Activated CD8-positive, alpha-beta memory T cell treated with anti-CD3 and anti-CD28 coated beads, Interleukin-2, amount 10 ng/mL, durations not matched to agents 7 days and 5 days (primary cell): ENCODE measurements at regions of chr11 and their contacts with region 1.

Region 1: DNA sequence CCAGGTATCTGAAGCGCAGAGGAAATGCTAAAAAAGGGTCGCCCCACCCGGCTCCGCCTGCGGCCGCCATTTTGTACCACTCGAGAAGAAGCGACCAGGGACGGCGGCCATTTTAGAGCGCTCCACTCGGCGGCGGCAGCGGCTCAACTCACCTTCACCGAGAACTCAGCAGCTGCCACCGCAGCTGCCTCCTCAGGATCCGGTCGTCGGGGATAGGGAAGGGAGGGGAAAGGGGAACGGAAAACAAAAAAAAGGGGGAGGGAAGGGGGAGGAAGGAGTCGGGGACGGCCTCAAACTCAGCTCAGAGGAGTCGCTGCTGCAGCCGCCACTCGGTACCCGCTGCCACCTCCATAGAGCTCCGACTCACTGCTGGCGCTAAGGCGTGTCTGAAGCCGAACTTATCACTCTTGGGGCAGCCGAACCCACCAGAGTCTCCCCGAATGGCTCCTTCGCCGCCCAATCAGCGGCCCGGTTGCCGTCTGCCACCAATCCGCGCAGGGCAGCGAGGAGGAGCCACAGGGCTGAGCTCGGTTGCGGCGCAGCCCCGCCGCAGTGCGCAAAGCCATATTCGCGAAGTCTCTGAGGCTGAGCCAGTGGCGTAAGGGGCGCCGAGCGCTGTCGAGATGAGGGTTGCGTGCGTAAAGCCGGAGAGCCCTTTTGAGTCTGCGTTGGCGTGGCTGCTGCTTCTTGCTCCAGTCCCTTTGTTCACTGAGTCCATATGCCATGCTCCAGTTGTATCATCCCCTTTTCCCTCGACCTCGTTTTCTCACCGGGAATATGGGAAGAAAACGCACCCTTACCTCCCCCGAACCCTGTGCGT is at the start of gene EIF4G2:
- DNase-seq: peak; percentile 98
- ATAC-seq: peak; percentile 93
- H3K4me3 Mint-ChIP-seq: peak within 1 kb of the TSS; percentile 86
- H3K27ac Mint-ChIP-seq: peak within 1 kb of the TSS; percentile 99
- H3K4me1 Mint-ChIP-seq: peaks cover 42% of the 10 kb centered on the region
- H3K27me3 Mint-ChIP-seq: no peaks in the 10 kb centered on the region
- total RNA-seq, gene EIF4G2: 579 to 898 TPM

Region 2: GRCh38 chr11:10784232-10785145 is 24.3 kb before region 1 on chr11:
- CTCF ChIA-PET with region 1: no interaction called
- DNase-seq: no peak
- ATAC-seq: no peak
- H3K4me3 Mint-ChIP-seq: no peak overlapping the region
- H3K27ac Mint-ChIP-seq: no peak overlapping the region
- H3K4me1 Mint-ChIP-seq: peaks cover under 1% of the 10 kb centered on the region
- H3K27me3 Mint-ChIP-seq: no peaks in the 10 kb centered on the region

Region 3: DNA sequence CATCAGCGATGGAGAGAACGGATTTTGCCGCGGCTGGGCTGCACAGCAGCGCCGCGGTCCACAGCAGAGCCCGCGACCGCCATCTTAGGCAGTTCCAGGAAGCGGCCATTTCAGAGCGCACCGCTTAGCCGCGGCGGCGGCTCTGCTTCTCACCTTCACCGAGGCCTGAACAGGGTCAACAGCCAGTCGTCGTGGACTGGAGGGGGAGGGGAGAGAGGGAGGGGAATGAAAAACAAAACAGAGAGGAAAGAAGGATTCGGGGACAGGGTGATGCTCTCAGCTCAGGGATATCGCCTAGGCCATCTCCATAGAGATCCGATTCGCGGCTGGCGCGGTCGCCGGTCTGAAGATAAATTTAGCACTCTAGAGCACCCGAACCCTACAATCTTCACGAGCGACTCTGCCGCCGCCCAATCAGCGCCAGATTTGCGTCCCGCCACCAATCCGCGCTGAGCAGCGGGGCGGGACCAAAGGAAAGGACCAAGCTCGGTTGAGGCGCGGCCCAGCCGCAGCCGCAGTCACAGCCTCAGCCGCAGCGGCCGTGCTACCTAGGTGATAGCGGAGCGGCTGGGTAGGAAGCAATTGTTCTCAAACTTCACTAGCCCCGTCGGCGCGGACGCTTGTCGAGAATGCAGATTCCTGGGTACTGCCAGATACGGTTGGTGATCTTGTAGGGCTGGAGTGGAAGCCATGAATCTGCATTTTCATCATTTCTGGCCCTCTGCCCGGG is 49.1 kb after region 1 on chr11 and contains the start of gene ZBED5:
- CTCF ChIA-PET with region 1: interaction called, 28 read pairs
- DNase-seq: peak; percentile 97
- ATAC-seq: peak; percentile 91
- H3K4me3 Mint-ChIP-seq: peak within 1 kb of the TSS; percentile 98
- H3K27ac Mint-ChIP-seq: peak within 1 kb of the TSS; percentile 100
- H3K4me1 Mint-ChIP-seq: peaks cover 33% of the 10 kb centered on the region
- H3K27me3 Mint-ChIP-seq: no peaks in the 10 kb centered on the region
- total RNA-seq, gene ZBED5: 34.9 to 35.5 TPM